CD8-positive, alpha-beta T cell (primary cell): ENCODE measurements at regions of chr5 and their contacts with region 1.

Region 1: GRCh38 chr5:141701360-141702119 is 19.5 kb upstream of the ARAP3 start:
- DNase-seq: peak in 1 of 9 experiments; percentile 30
- ATAC-seq: peak; percentile 13
- H3K4me3 ChIP-seq: peak overlapping the region; percentile 57 to 89
- H3K4me3 Mint-ChIP-seq: no peak overlapping the region
- H3K27ac ChIP-seq: no peak overlapping the region
- H3K27ac Mint-ChIP-seq: no peak overlapping the region
- H3K4me1 ChIP-seq: peaks cover 15% of the 10 kb centered on the region
- H3K4me1 Mint-ChIP-seq: peaks cover 19% of the 10 kb centered on the region
- H3K27me3 ChIP-seq: peaks cover 0 to 3% of the 10 kb centered on the region in 2 experiments
- H3K27me3 Mint-ChIP-seq: peaks cover 45% of the 10 kb centered on the region
- CTCF ChIP-seq: no peak

Region 2: DNA sequence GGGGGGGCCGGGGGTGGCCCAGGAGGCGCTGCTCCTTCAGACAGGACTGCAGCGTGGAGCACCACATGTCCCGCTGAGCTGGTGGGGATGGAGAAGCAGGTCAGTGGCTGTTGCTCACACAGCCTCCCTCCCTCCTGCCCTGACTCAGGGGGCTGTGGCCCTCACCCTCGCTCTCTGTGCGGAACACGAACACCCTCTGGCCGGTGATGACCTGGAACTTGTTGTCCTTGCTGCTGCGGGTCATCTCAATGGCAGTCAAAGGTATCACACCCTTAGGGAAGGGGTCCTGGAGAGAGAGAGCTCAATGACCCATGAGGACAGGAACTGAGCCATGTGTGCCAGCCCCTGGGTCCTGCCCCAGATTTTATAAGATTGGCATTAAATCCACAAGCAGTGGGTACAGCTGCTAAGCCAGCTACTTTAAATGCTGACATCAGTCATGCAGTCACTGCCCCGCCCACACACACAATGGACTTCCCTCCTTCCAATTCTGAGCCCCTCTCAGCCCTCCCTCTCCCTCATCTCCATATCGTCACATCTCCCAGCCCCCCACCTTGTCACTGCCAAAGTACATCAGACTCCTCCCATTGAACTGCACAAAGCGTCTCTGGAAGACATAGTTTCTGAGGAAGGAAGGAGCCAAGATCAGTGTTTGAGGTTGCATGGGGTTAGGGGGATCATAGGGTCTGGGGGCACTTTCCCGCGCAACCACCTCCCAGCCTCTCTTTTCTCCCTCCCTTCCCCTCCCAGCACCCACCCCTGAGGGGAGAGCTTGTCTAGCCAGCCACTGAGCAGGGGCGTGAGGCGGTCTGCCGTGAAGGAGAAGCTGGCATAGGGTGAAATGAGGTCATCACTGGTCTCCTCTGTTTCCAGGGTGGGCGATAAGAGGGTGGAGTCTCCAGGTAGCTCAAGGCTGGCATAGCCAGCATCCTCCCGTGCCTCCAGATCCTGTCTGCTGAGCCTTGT is 28.4 kb before region 1 on chr5:
- CTCF ChIA-PET with region 1: interaction called, 19 read pairs
- POLR2A ChIA-PET with region 1: no interaction called
- intact Hi-C with region 1: no loop called
- DNase-seq: no peak
- ATAC-seq: no peak
- H3K4me3 ChIP-seq: no peak overlapping the region
- H3K4me3 Mint-ChIP-seq: no peak overlapping the region
- H3K27ac ChIP-seq: no peak overlapping the region
- H3K27ac Mint-ChIP-seq: no peak overlapping the region
- H3K4me1 ChIP-seq: no peaks in the 10 kb centered on the region
- H3K4me1 Mint-ChIP-seq: no peaks in the 10 kb centered on the region
- H3K27me3 ChIP-seq: no peaks in the 10 kb centered on the region
- H3K27me3 Mint-ChIP-seq: no peaks in the 10 kb centered on the region
- CTCF ChIP-seq: no peak

Region 3: DNA sequence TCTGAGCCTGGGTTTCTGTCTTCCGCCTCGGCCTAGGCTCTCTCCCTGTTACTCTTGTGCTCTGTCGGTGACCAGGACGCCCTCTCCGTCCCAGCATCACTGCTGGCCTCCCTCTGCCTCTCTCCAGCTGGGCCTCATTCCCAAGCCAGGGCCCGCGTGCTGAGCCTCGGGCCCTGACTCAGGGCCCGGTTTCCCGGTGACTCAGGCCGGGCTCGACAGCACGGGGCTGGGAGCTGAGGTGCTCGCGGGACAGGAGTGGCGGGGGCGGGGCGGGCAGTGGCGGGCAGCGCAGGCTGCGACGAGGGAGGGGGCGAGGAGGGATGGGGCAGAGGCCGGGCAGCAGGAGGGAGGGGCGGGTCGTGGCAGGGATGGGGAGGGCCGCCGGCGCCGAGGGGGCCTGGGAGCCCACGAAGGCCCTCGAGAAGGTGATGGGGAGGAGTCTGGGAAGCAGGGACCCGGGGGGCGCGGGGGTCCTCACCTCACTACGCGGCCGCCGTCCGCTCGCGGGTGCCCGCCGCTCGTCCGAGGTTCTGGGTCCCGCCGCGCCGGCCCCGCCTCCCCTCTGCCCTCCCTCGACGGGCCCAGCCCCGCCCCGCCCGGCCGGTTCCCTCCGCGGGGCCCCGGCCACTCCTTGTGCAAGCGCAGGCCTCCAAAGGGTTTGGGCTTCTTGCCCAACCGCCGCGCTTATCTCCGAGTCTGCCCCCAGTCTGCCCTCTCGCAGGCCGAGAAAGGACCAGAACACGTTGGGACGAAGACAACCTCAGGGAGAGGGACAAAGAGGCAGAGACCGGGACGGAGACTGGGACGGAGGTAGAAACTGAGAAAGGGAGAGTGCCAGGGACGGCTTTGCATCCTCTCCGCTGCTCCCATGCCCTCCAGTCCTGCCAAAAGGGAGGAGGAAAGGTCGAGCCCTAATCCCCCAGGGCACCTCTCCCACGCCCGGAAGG is 19.6 kb before region 1 on chr5 and contains the start of gene ARAP3:
- CTCF ChIA-PET with region 1: interaction called, 19 read pairs
- POLR2A ChIA-PET with region 1: interaction called, 3 read pairs
- intact Hi-C with region 1: no loop called
- DNase-seq: peak in 7 of 9 experiments; percentile 30 to 78 (median 49)
- ATAC-seq: peak; percentile 54
- H3K4me3 ChIP-seq: peak within 1 kb of the TSS; percentile 55 to 56
- H3K4me3 Mint-ChIP-seq: peak within 1 kb of the TSS; percentile 76
- H3K27ac ChIP-seq: peak within 1 kb of the TSS in 1 of 2 experiments; percentile 34
- H3K27ac Mint-ChIP-seq: peak within 1 kb of the TSS; percentile 49
- H3K4me1 ChIP-seq: peaks cover 30% of the 10 kb centered on the region
- H3K4me1 Mint-ChIP-seq: peaks cover 28% of the 10 kb centered on the region
- H3K27me3 ChIP-seq: no peaks in the 10 kb centered on the region
- H3K27me3 Mint-ChIP-seq: no peaks in the 10 kb centered on the region
- CTCF ChIP-seq: no peak
- total RNA-seq, gene ARAP3: 0.73 to 1.2 TPM

Region 4: GRCh38 chr5:141713616-141714309 is 12.2 kb after region 1 on chr5:
- CTCF ChIA-PET with region 1: interaction called, 19 read pairs
- POLR2A ChIA-PET with region 1: no interaction called
- intact Hi-C with region 1: no loop called
- DNase-seq: no peak
- ATAC-seq: no peak
- H3K4me3 ChIP-seq: no peak overlapping the region
- H3K4me3 Mint-ChIP-seq: no peak overlapping the region
- H3K27ac ChIP-seq: no peak overlapping the region
- H3K27ac Mint-ChIP-seq: no peak overlapping the region
- H3K4me1 ChIP-seq: no peaks in the 10 kb centered on the region
- H3K4me1 Mint-ChIP-seq: no peaks in the 10 kb centered on the region
- H3K27me3 ChIP-seq: no peaks in the 10 kb centered on the region
- H3K27me3 Mint-ChIP-seq: peaks cover 23% of the 10 kb centered on the region
- CTCF ChIP-seq: no peak

Region 5: DNA sequence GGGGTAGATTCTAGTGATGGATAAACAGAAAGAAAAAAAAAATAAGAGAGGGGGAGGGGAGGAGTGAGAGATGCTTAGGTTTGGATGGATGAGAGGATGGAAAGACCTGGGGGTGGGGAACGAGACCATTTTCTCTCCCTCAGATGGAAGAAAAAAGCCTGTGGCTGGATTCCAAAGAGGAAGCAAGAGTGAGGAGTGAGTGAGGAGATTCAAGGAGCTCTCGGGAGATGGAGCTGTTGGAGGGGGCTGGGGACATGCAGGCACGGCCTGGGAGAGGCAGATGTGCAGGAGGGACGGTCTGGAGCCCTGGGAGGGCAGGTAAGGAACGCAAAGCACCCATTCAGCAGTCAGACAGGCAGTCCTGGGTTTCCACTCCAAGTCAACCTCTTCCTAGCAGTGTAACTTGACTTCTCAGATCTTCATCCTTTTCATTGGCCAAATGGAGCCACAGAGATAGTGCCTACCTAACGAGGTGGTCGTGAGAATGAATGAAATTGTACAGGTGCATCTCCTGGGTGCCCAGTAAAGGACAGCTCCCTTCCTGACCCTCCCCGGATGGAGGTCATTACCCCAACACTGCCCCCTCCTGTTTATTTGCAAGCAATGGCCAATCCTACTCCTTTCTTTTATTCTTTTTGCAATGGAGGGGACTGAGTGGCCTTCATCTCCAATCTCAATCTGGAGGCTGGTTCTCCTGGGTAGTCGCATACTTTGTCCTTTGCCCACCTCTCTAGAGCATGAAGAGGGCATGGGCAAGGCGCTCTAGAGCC is 124.4 kb after region 1 on chr5:
- CTCF ChIA-PET with region 1: interaction called, 17 read pairs
- POLR2A ChIA-PET with region 1: no interaction called
- intact Hi-C with region 1: loop called in 1 of 2 experiments (anchors 1 kb)
- DNase-seq: peak in 2 of 9 experiments; percentile 32 to 38
- ATAC-seq: no peak
- H3K4me3 ChIP-seq: no peak overlapping the region
- H3K4me3 Mint-ChIP-seq: no peak overlapping the region
- H3K27ac ChIP-seq: no peak overlapping the region
- H3K27ac Mint-ChIP-seq: no peak overlapping the region
- H3K4me1 ChIP-seq: no peaks in the 10 kb centered on the region
- H3K4me1 Mint-ChIP-seq: no peaks in the 10 kb centered on the region
- H3K27me3 ChIP-seq: no peaks in the 10 kb centered on the region
- H3K27me3 Mint-ChIP-seq: peaks cover 8% of the 10 kb centered on the region
- CTCF ChIP-seq: no peak